ENCODE measurements at regions of chrX and their contacts with region 1.

Region 1: DNA sequence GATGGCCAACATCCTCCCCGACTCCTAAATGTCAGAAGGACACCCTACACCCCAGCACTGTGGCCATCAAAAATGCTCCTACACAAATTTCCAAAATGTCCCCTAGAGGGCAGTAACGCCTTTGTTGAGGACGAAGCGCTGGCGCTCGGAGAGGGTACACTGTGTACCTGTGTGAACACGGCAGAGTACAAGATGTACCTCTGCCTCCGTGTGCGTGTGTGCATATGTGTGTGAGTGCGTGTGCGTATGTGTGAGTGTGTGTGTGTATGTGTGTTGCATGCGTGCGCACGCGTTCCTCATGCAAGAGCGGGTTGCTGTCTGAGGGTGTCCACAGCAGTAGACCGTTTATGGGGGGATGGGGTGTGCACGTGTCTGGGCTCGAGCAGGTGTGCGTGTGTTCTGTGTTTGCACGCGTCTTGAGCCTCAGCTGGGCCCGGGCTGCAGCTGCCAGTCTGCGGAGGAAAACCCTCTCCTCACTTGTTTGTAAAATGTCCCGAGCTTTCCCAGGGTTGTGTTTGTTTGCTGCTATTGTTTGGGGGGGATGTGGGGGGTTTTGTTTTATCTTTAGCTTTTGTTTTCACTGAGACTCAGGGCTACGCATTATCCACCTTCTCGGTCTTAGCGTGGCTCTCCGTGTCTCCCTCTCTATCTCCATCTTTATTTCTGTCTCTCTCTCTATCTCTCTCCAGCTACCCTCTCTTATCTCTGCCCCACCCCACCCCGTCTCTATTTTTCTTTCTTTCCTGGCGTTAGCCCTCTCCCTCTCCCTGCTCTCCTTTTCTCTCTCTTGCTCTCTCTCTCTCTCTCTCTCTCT is 10.4 kb upstream of the TSPYL2 start:
- DNase-seq: peak; percentile 69
- H3K4me3 Mint-ChIP-seq: peak overlapping the region; percentile 76
- H3K27ac Mint-ChIP-seq: peak overlapping the region; percentile 50
- H3K4me1 Mint-ChIP-seq: peaks cover 13% of the 10 kb centered on the region
- H3K27me3 Mint-ChIP-seq: no peaks in the 10 kb centered on the region

Region 2: GRCh38 chrX:53081925-53082772 is 10.3 kb after region 1 on chrX and contains the start of gene TSPYL2:
- CTCF ChIA-PET with region 1: interaction called, 4 read pairs
- POLR2A ChIA-PET with region 1: interaction called, 13 read pairs
- DNase-seq: peak; percentile 93
- H3K4me3 Mint-ChIP-seq: peak within 1 kb of the TSS; percentile 81
- H3K27ac Mint-ChIP-seq: peak within 1 kb of the TSS; percentile 82
- H3K4me1 Mint-ChIP-seq: peaks cover 40% of the 10 kb centered on the region
- H3K27me3 Mint-ChIP-seq: no peaks in the 10 kb centered on the region
- total RNA-seq, gene TSPYL2: 30.2 to 31.1 TPM